ENCODE measurements at regions of chr9 and their contacts with region 1.

Region 1: DNA sequence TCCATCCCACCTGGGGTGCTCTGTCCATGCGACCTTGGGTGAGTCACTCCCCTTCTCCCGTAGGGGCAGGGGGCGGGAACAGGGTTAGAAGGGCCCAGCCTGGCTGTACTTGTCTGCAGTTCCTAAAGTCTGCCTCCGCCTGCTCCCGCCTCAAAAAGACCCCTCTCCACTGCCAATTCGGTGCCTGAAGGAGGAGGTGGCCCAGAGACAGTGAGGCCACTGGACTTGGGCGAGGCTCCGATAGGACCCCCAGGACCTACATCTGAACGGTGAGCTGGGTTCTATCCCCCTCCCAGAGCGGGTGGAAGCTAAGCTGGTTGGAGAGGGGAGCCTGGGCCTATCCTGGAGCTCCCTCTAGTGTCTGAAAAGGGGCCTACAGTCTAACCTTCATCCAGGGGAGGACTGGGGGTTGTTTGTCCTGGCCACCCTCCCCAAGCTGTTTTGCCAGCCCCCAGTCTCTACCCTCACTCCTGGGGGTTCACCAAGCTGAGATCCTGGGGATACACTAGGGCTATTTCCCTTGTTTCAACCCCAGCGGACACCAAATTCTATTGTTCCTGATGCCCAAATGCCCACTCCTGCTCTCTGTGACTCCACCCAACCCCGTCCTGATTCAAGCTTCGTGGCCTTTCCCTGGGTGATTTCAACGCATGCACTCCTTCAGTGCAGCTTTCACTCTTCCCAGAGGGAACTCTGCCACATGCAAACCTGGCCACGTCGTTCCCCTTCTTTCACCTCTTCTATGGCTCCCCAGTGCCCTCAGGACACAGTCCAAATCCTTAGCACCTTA is 6.1 kb upstream of the CRB2 start:
- DNase-seq: no peak

Region 2: GRCh38 chr9:123070198-123070597 is 279.7 kb before region 1 on chr9:
- intact Hi-C with region 1: no loop called
- DNase-seq: no peak

Region 3: DNA sequence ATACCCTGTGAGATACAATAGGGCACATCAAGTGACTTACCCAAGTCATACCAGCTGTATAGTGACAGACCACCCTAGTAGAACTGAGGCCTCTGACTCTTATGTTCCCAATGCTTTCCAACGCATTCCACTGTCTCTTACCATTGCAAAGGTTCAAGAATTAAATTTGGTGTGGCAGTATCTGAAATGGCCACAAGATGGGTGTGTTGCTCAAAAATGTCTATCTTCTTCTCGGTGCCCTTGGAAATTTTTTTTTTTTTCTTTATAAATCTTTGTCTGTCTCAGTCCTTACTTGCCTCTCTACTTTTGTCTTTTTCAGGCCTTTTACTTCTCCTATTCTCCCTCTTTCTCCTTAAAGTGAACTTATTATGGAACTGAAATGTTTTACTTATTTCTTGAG is 268.1 kb before region 1 on chr9:
- intact Hi-C with region 1: loop called (anchors 5 kb)
- DNase-seq: no peak

Region 4: GRCh38 chr9:123112015-123112975 is 237.6 kb before region 1 on chr9:
- intact Hi-C with region 1: loop called (anchors 10 kb)
- DNase-seq: no peak

Region 5: DNA sequence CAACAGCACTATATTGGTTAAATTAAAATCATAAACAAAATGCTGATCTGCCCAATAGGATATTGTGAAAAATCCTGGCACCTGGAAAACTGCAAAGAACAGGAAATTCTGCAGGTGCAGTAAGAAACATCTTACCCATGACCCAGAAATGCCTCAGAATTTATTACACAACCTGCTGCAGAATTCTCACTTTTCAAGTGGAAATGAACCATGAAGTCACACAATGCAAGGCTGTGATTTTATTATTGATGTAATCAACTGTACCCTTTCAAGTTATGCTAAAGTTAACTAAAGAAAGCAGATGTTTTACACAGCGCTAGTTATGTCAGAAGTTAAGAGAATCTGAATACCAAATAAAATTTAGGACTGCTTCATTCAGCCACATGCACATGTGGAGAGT is 87.5 kb before region 1 on chr9:
- intact Hi-C with region 1: no loop called
- DNase-seq: no peak

Region 6: GRCh38 chr9:123282362-123283047 is 67.4 kb before region 1 on chr9:
- intact Hi-C with region 1: no loop called
- DNase-seq: peak; percentile 87

Region 7: GRCh38 chr9:123383512-123384170 is 33.8 kb after region 1 on chr9:
- intact Hi-C with region 1: loop called (anchors 2 kb)
- DNase-seq: no peak